PC-9 (cell line): ENCODE measurements at regions of chr3 and their contacts with region 1.

Region 1: DNA sequence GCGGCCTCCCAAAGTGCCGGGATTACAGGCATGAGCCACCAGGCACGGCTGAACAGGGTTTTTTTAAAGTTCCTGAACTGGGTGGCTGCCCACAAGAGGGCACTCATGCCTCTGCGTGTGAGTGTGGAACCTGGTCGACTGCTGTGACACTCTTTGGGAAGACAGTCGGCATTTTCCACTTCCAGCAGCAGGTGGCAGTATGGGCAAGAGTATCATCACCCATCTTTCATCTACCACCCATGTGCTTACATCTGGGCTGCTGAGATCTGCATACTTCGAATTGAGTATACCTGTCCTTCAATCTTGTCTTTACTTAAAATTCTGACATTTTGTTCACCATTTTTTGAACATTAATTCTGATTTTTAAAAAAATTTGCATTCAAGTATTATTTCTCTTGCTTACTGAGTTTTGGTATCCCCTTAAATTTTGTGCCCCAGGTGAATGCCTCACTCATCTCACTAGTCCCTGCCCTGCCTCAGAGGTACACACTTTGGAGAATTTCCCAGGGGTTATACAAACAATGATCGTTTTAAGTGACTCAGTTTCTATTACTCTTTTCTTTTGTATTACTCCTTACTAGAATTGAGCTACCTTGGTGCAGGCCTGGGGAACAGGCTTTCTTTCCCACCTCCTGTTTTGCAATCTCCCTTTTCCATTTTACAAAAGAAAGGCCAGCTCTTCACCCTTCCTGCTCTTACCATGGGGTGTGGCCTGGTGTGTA is 11.8 kb downstream of the CLEC3B start:
- DNase-seq: peak; percentile 83 to 91
- H3K4me3 ChIP-seq: no peak overlapping the region
- H3K27ac ChIP-seq: no peak overlapping the region
- H3K4me1 ChIP-seq: peaks cover 30% of the 10 kb centered on the region
- H3K27me3 ChIP-seq: no peaks in the 10 kb centered on the region
- CTCF ChIP-seq: peak; percentile 88

Region 2: DNA sequence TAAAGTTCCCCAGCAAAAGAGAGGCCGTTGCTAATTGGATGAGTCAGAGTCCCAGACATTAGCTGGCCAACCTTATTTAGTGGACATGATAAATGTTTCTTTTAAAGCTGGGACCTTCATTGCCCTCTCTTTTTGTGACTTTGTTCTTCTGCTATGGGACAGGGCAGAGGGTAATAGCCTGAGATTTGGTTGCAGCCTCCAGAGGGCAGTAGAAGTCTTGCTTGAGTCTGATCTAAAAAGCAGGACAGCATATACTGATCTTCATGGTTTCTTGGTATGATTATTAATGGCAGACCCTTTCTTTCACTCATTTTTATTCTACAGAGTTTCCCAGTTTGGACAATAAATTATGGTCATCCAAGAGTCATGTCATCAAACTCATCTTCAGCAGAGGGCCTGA is 508.0 kb before region 1 on chr3:
- CTCF ChIA-PET with region 1: no interaction called
- POLR2A ChIA-PET with region 1: no interaction called
- intact Hi-C with region 1: loop called (anchors 2 kb)
- DNase-seq: no peak
- H3K4me3 ChIP-seq: no peak overlapping the region
- H3K27ac ChIP-seq: no peak overlapping the region
- H3K4me1 ChIP-seq: no peaks in the 10 kb centered on the region
- H3K27me3 ChIP-seq: peaks cover 18% of the 10 kb centered on the region
- CTCF ChIP-seq: no peak; the same call in 1 of the 2 replicates

Region 3: GRCh38 chr3:44772099-44772442 is 265.8 kb before region 1 on chr3:
- CTCF ChIA-PET with region 1: no interaction called
- POLR2A ChIA-PET with region 1: no interaction called
- intact Hi-C with region 1: no loop called
- DNase-seq: no peak
- H3K4me3 ChIP-seq: no peak overlapping the region
- H3K27ac ChIP-seq: no peak overlapping the region
- H3K4me1 ChIP-seq: no peaks in the 10 kb centered on the region
- H3K27me3 ChIP-seq: no peaks in the 10 kb centered on the region
- CTCF ChIP-seq: no peak

Region 4: DNA sequence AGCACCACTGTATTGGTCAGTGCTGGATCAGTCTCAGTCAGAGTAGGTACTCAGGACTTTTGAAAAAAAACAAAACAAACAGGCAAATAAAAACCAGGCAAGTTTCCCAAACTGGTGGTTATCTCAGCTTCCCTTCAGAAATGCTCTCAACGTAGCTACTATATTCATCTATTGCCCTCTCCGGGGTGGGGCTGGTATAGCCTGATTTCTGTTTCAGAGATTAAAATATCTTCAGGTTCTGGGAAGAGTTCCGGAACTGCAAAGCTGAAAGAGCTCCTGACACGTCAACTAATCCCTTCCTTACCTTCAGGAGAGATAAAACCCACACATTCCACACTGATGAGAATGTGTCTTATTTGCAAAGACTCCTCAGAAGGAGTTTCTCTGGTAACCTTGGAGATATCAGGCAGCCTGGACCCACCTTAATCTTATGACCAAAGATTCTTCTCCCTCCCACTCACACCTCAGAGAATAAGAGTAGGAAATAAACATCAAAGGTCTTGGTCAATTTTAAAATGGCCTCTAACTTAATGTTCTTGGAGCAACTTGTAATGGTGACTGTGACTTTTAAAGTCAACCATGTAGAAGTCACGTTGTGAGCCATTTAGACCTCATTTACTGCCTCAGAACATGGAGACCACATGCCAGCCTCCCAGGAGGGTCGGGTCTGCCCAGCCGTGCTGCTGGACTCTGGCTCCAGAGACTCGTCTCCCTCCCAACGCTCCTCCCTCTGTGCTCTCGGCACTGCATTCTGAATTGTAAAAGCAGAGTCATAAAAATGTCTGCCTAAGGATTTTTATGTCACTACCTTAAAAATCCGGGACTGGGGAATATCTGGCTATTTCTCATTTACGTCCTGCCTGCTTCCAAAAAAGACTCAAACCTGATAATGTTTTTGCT is 54.5 kb after region 1 on chr3:
- CTCF ChIA-PET with region 1: interaction called, 16 read pairs
- POLR2A ChIA-PET with region 1: interaction called, 6 read pairs
- intact Hi-C with region 1: loop called (anchors 1 kb)
- DNase-seq: peak; percentile 80 to 99
- H3K4me3 ChIP-seq: no peak overlapping the region
- H3K27ac ChIP-seq: peak overlapping the region; percentile 95
- H3K4me1 ChIP-seq: peaks cover 43% of the 10 kb centered on the region
- H3K27me3 ChIP-seq: no peaks in the 10 kb centered on the region
- CTCF ChIP-seq: peak; percentile 36; the same call in 1 of the 2 replicates

Region 5: GRCh38 chr3:45210308-45211041 is 172.6 kb after region 1 on chr3:
- CTCF ChIA-PET with region 1: interaction called, 17 read pairs
- POLR2A ChIA-PET with region 1: no interaction called
- intact Hi-C with region 1: loop called (anchors 1 kb)
- DNase-seq: peak; percentile 66 to 79
- H3K4me3 ChIP-seq: no peak overlapping the region
- H3K27ac ChIP-seq: no peak overlapping the region
- H3K4me1 ChIP-seq: peaks cover 26% of the 10 kb centered on the region
- H3K27me3 ChIP-seq: no peaks in the 10 kb centered on the region
- CTCF ChIP-seq: peak; percentile 88

Region 6: DNA sequence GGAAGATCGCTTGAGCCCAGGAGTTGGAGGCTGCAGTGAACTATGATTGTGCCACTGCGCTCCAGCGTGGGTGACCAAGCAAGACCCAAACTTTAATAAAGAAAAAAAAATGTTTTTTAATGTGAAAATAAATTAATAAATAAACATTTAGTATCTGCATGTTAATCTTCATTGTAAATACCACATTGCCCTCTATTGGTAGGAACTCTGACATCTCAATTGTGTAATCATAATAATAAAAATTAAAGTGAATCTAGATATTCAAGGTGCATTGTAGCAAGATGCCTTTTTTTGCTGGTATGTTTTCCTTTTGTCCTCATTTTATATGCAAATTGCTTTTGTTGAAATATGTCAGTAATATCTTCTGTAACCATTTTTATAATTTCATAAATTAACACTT is 461.6 kb after region 1 on chr3:
- CTCF ChIA-PET with region 1: interaction called, 9 read pairs
- POLR2A ChIA-PET with region 1: interaction called, 3 read pairs
- intact Hi-C with region 1: loop called (anchors 1 kb)
- DNase-seq: peak; percentile 4 to 50
- H3K4me3 ChIP-seq: no peak overlapping the region
- H3K27ac ChIP-seq: no peak overlapping the region
- H3K4me1 ChIP-seq: no peaks in the 10 kb centered on the region
- H3K27me3 ChIP-seq: no peaks in the 10 kb centered on the region
- CTCF ChIP-seq: peak; percentile 71

Region 7: GRCh38 chr3:45688882-45689756 is 651.2 kb after region 1 on chr3 and contains the start of gene SACM1L:
- CTCF ChIA-PET with region 1: no interaction called
- POLR2A ChIA-PET with region 1: no interaction called
- intact Hi-C with region 1: loop called (anchors 10 kb)
- DNase-seq: peak; percentile 94 to 96
- H3K4me3 ChIP-seq: peak within 1 kb of the TSS; percentile 97
- H3K27ac ChIP-seq: peak within 1 kb of the TSS; percentile 76
- H3K4me1 ChIP-seq: peaks cover 16% of the 10 kb centered on the region; the same call in 1 of the 2 replicates
- H3K27me3 ChIP-seq: no peaks in the 10 kb centered on the region
- CTCF ChIP-seq: no peak
- total RNA-seq, gene SACM1L: 29.9 and 33.9 TPM in 2 replicates

Region 8: DNA sequence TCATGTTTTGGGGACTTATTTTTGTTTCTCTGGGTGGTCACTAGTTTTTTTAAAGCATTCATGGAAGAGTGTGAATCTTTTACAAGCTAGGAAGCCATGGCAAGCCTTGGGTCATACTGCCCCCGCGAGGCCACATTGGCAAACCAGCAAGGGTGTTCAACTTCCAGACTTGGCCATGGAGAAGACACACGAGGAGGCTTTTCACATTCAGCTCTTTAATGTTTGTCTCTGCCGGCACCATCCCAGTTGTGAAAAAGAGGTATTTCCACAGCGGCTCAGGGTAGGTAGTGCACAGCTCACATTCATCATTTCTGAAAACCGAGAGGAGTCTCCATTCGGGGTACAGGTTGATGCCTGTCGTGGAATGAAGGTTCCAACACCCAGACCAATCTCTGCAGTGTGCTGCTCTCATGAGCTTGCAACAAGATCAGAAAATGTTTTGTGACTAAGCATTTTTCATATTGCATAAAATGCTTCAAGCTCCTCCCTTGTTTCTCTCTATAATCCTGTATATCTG is 1340.6 kb after region 1 on chr3:
- CTCF ChIA-PET with region 1: no interaction called
- POLR2A ChIA-PET with region 1: no interaction called
- intact Hi-C with region 1: loop called (anchors 10 kb)
- DNase-seq: peak; percentile 64 to 69
- H3K4me3 ChIP-seq: no peak overlapping the region
- H3K27ac ChIP-seq: no peak overlapping the region
- H3K4me1 ChIP-seq: peaks cover 27% of the 10 kb centered on the region
- H3K27me3 ChIP-seq: no peaks in the 10 kb centered on the region
- CTCF ChIP-seq: peak; percentile 76